ENCODE measurements at regions of chr17 and their contacts with region 1.

Region 1: DNA sequence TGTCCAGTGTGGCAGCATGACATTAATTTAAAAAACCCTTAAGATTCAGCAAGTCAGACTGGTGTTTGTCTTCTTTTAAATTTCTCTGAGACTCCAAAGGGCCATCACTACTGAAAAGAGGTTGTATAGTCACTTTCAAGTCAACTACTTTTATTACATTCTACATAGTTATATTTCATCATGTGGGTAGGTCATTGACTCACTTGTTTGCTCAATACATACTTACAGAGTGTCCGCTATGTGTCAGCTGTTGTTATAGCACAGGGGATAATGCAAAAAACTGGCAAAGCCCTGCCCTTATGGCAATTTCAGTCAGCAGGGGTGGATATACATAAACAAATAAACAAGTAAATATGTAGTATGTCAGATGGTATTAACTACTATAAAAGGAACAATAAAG is 2.5 kb upstream of the MYH4 start:
- DNase-seq: no peak
- ATAC-seq: no peak
- H3K4me3 ChIP-seq: no peak overlapping the region
- H3K27ac ChIP-seq: no peak overlapping the region
- H3K4me1 ChIP-seq: no peaks in the 10 kb centered on the region
- H3K27me3 ChIP-seq: no peaks in the 10 kb centered on the region
- CTCF ChIP-seq: no peak

Region 2: GRCh38 chr17:10327640-10328039 is 144.2 kb before region 1 on chr17:
- intact Hi-C with region 1: loop called in 1 of 2 experiments (anchors 10 kb)
- DNase-seq: peak; percentile 75 to 88
- ATAC-seq: peak; percentile 71 to 87 (median 84)
- H3K4me3 ChIP-seq: no peak overlapping the region
- H3K27ac ChIP-seq: no peak overlapping the region
- H3K4me1 ChIP-seq: no peaks in the 10 kb centered on the region
- H3K27me3 ChIP-seq: no peaks in the 10 kb centered on the region
- CTCF ChIP-seq: peak; percentile 92

Region 3: GRCh38 chr17:10394201-10394887 is 77.5 kb before region 1 on chr17:
- intact Hi-C with region 1: loop called in 1 of 2 experiments (anchors 10 kb)
- DNase-seq: no peak
- ATAC-seq: no peak
- H3K4me3 ChIP-seq: no peak overlapping the region
- H3K27ac ChIP-seq: no peak overlapping the region
- H3K4me1 ChIP-seq: no peaks in the 10 kb centered on the region
- H3K27me3 ChIP-seq: no peaks in the 10 kb centered on the region
- CTCF ChIP-seq: no peak